ENCODE measurements at regions of chr14 and their contacts with region 1.

Region 1: GRCh38 chr14:61750708-61751474 is 11.3 kb upstream of the SNAPC1 start:
- DNase-seq: peak; percentile 84 to 89 (median 86)
- H3K4me3 ChIP-seq: peak overlapping the region; percentile 42 to 88 (median 66)
- H3K27ac ChIP-seq: peak overlapping the region in 1 of 2 experiments; percentile 76
- H3K4me1 ChIP-seq: peaks cover 0 to 28% (median 15%) of the 10 kb centered on the region in 4 experiments
- H3K27me3 ChIP-seq: no peaks in the 10 kb centered on the region

Region 2: DNA sequence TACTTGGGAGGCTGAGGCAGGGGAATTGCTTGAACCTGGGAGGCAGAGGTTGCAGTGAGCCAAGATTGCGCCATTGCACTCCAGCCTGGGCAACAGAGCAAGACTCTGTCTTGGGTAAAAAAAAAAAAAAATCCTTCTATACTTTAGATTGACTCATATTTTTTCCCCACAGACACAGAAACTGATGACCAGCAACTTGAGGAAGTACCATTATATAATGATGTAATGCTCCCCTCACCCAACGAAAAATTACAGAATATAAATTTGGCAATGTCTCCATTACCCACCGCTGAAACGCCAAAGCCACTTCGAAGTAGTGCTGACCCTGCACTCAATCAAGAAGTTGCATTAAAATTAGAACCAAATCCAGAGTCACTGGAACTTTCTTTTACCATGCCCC is 13.0 kb before region 1 on chr14:
- CTCF ChIA-PET with region 1: interaction called, 23 read pairs
- POLR2A ChIA-PET with region 1: no interaction called
- DNase-seq: peak in 1 of 3 donors; percentile 18
- H3K4me3 ChIP-seq: no peak overlapping the region
- H3K27ac ChIP-seq: no peak overlapping the region
- H3K4me1 ChIP-seq: no peaks in the 10 kb centered on the region
- H3K27me3 ChIP-seq: no peaks in the 10 kb centered on the region

Region 3: DNA sequence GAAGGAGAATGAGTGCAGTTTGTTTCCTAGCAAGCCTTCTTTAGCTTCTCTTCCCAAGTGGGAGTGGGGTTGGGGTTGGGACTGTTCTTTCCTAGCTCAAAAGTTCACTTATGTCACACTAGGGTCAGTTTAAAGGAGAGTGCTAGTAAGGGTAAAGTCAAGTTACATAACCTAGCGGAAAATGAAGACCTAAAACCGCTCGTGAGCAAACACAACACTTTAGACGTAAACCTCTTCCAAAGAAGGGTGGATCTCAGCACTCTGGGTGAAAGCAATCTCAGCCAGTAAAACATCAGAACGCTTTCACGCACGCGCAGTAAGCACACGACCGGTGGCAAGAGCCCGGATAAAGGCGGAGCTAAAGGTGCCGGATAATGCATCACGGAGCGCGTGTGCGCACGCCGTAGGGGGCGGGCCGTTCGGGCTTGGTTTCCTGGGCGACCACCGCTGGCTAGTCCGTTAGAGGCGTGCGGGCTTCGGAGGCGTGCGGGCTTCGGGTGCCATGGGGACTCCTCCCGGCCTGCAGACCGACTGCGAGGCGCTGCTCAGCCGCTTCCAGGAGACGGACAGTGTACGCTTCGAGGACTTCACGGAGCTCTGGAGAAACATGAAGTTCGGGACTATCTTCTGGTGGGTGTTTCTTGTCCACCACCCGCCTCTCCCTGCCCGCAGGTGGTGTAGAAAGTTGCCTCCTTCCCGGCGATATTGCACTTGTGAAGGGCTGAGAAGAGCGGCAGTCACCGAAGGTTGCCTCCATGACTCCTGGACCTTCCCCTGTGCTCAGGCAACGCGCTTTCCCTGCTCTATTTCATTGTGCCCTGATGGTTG is 11.3 kb after region 1 on chr14 and contains the start of gene SNAPC1:
- CTCF ChIA-PET with region 1: interaction called, 19 read pairs
- POLR2A ChIA-PET with region 1: interaction called, 17 read pairs
- DNase-seq: peak; percentile 97 to 99 (median 99)
- H3K4me3 ChIP-seq: peak within 1 kb of the TSS; percentile 65 to 97 (median 92)
- H3K27ac ChIP-seq: peak within 1 kb of the TSS; percentile 83 to 88
- H3K4me1 ChIP-seq: peaks cover 5 to 28% (median 20%) of the 10 kb centered on the region in 4 experiments
- H3K27me3 ChIP-seq: no peaks in the 10 kb centered on the region